Caco-2 (cell line): ENCODE measurements at regions of chr1 and their contacts with region 1.

Region 1: DNA sequence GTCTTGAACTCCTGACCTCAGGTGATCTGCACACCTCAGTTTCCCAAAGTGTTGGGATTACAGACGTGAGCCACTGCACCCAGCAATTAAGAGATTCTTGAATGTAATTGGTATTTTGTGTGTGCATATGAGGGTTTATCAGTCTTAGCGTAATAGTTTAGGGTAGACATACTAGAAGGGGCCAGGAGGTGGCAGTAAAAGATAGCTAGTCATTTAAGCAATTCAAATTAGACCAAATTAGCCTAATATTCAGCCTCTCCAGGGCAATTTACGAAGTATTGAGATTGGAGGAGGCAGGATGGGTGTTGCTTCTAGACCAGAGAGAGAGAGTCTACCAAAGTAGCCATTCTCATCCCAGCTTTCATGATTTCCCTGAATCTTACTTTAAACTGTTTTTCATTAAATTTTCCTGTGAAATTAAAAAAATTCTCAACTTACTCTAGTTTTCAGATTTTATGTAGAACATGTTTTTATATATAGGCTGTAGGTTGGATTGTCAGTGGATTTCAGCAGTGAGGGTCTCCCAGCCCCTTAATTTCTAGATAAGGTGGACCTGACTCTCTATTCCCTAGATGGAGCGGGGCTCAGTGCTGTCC is 119.7 kb downstream of the HHAT start:
- DNase-seq: peak in 1 of 2 experiments; percentile 41
- H3K4me3 ChIP-seq: no peak overlapping the region
- H3K4me3 Mint-ChIP-seq: no peak overlapping the region
- H3K27ac Mint-ChIP-seq: no peak overlapping the region
- H3K4me1 ChIP-seq: no peaks in the 10 kb centered on the region
- H3K4me1 Mint-ChIP-seq: no peaks in the 10 kb centered on the region
- H3K27me3 ChIP-seq: no peaks in the 10 kb centered on the region
- H3K27me3 Mint-ChIP-seq: peaks cover 8% of the 10 kb centered on the region
- CTCF ChIP-seq: peak; percentile 49 to 68

Region 2: GRCh38 chr1:210407207-210407886 is 41.0 kb before region 1 on chr1:
- CTCF ChIA-PET with region 1: interaction called, 9 read pairs
- POLR2A ChIA-PET with region 1: no interaction called
- intact Hi-C with region 1: loop called (anchors 5 kb)
- DNase-seq: peak; percentile 50 to 82
- H3K4me3 ChIP-seq: no peak overlapping the region
- H3K4me3 Mint-ChIP-seq: no peak overlapping the region
- H3K27ac Mint-ChIP-seq: no peak overlapping the region
- H3K4me1 ChIP-seq: no peaks in the 10 kb centered on the region
- H3K4me1 Mint-ChIP-seq: no peaks in the 10 kb centered on the region
- H3K27me3 ChIP-seq: no peaks in the 10 kb centered on the region
- H3K27me3 Mint-ChIP-seq: no peaks in the 10 kb centered on the region
- CTCF ChIP-seq: peak; percentile 92 to 96

Region 3: GRCh38 chr1:210428696-210429095 is 19.7 kb before region 1 on chr1:
- CTCF ChIA-PET with region 1: no interaction called
- POLR2A ChIA-PET with region 1: no interaction called
- intact Hi-C with region 1: no loop called
- DNase-seq: no peak
- H3K4me3 ChIP-seq: no peak overlapping the region
- H3K4me3 Mint-ChIP-seq: no peak overlapping the region
- H3K27ac Mint-ChIP-seq: no peak overlapping the region
- H3K4me1 ChIP-seq: no peaks in the 10 kb centered on the region
- H3K4me1 Mint-ChIP-seq: no peaks in the 10 kb centered on the region
- H3K27me3 ChIP-seq: no peaks in the 10 kb centered on the region
- H3K27me3 Mint-ChIP-seq: peaks cover 22% of the 10 kb centered on the region
- CTCF ChIP-seq: no peak

Region 4: DNA sequence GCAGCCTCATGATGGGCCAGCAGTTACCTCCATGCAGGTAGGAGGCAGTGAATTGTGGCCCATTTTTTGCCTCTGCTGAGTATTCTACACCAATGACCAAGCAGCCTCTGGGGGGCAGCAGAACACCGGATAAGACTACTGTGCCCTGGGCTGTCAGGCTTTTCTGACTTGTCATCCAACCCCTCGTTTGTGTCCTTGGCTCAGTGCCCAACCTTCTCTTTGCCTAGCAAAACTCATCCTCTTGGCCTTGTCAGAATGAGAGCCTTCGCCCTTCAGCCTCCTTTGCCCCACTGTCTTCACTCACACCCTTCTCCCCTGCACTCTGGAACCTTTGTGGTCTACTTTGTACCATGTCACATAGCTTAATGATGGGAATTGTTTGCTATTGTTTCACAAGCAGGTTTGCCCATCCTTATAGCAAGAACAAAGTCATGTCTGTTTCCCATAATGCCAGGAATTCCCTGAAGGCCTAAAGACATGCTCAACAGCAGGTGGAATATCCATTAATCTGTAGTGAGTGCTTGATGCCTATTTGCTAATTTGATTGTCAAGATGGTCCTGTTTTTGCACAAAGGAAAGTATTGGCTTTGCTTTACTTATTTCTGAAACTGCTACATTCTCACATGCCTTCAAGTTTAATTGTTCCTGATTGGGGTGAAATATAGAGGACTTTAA is 136.2 kb after region 1 on chr1:
- CTCF ChIA-PET with region 1: interaction called, 3 read pairs
- POLR2A ChIA-PET with region 1: no interaction called
- intact Hi-C with region 1: loop called (anchors 1 kb)
- DNase-seq: peak; percentile 78 to 84
- H3K4me3 ChIP-seq: no peak overlapping the region
- H3K4me3 Mint-ChIP-seq: no peak overlapping the region
- H3K27ac Mint-ChIP-seq: no peak overlapping the region
- H3K4me1 ChIP-seq: no peaks in the 10 kb centered on the region
- H3K4me1 Mint-ChIP-seq: peaks cover 7% of the 10 kb centered on the region
- H3K27me3 ChIP-seq: no peaks in the 10 kb centered on the region
- H3K27me3 Mint-ChIP-seq: no peaks in the 10 kb centered on the region
- CTCF ChIP-seq: peak; percentile 73 to 82

Region 5: DNA sequence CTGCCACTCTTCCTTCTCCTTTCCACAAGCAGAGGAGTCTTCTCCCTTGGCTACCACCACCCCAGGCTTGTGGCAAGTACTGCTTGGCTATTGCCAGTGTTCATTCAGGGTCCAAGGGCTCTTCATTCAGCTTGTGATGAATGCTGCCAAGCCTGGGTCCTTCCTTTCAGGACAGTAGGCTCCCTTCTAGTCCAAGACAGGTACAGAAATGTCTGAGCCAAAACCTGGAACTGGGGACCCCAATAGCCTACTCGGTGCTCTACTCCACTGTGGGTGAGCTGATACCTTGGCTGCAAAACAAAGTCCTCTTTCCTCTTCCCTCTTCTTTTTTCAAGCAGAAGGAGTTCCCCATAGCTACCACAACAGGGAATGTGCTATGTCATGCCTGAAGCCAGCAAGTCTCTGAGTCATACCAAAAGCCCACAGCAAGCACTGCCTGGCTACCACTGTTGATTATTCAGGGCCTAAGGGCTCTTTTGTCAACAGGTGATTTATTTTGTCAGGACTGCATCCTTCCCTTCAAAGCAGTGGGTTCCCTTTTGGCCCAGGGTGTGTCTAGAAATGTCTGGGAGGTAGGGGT is 149.2 kb after region 1 on chr1:
- CTCF ChIA-PET with region 1: interaction called, 12 read pairs
- POLR2A ChIA-PET with region 1: no interaction called
- intact Hi-C with region 1: no loop called
- DNase-seq: peak; percentile 52 to 56
- H3K4me3 ChIP-seq: no peak overlapping the region
- H3K4me3 Mint-ChIP-seq: no peak overlapping the region
- H3K27ac Mint-ChIP-seq: peak overlapping the region; percentile 85
- H3K4me1 ChIP-seq: peaks cover 15% of the 10 kb centered on the region; the same call in 1 of the 2 replicates
- H3K4me1 Mint-ChIP-seq: peaks cover 18% of the 10 kb centered on the region
- H3K27me3 ChIP-seq: no peaks in the 10 kb centered on the region
- H3K27me3 Mint-ChIP-seq: peaks cover 11% of the 10 kb centered on the region
- CTCF ChIP-seq: no peak

Region 6: DNA sequence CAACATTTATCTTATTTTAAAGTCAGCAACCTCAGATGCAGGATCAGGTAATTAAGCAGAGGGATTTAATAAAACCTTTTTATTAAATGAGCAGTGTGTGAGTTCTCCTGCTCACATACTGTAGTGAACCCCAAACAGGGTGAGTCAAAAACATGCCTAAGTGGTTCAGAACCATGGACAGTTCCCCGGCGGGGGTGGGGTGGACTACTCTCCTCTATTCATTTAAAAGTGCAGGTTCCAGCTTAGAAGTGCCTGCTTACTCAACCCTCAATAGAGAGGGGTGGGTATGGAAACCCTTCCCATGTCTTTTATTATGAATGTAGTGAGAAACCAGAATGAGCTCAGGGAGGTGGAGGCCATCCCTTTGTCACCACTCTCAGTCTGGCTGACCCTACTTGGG is 278.2 kb after region 1 on chr1:
- CTCF ChIA-PET with region 1: no interaction called
- POLR2A ChIA-PET with region 1: no interaction called
- intact Hi-C with region 1: no loop called
- DNase-seq: peak in 1 of 2 experiments; percentile 58
- H3K4me3 ChIP-seq: no peak overlapping the region
- H3K4me3 Mint-ChIP-seq: no peak overlapping the region
- H3K27ac Mint-ChIP-seq: no peak overlapping the region
- H3K4me1 ChIP-seq: no peaks in the 10 kb centered on the region; the same call in 1 of the 2 replicates
- H3K4me1 Mint-ChIP-seq: no peaks in the 10 kb centered on the region
- H3K27me3 ChIP-seq: no peaks in the 10 kb centered on the region
- H3K27me3 Mint-ChIP-seq: peaks cover 3% of the 10 kb centered on the region
- CTCF ChIP-seq: no peak

Region 7: GRCh38 chr1:210779269-210779668 is 330.9 kb after region 1 on chr1:
- CTCF ChIA-PET with region 1: no interaction called
- POLR2A ChIA-PET with region 1: no interaction called
- intact Hi-C with region 1: loop called (anchors 5 kb)
- DNase-seq: no peak
- H3K4me3 ChIP-seq: no peak overlapping the region
- H3K4me3 Mint-ChIP-seq: no peak overlapping the region
- H3K27ac Mint-ChIP-seq: no peak overlapping the region
- H3K4me1 ChIP-seq: no peaks in the 10 kb centered on the region
- H3K4me1 Mint-ChIP-seq: no peaks in the 10 kb centered on the region
- H3K27me3 ChIP-seq: no peaks in the 10 kb centered on the region
- H3K27me3 Mint-ChIP-seq: peaks cover 12% of the 10 kb centered on the region
- CTCF ChIP-seq: no peak

Region 8: GRCh38 chr1:211133836-211134669 is 685.7 kb after region 1 on chr1 and contains the start of gene KCNH1:
- CTCF ChIA-PET with region 1: interaction called, 17 read pairs
- POLR2A ChIA-PET with region 1: no interaction called
- intact Hi-C with region 1: loop called (anchors 1 kb)
- DNase-seq: peak; percentile 65 to 87
- H3K4me3 ChIP-seq: peak within 1 kb of the TSS; percentile 26
- H3K4me3 Mint-ChIP-seq: peak within 1 kb of the TSS; percentile 60
- H3K27ac Mint-ChIP-seq: no peak within 1 kb of the TSS
- H3K4me1 ChIP-seq: no peaks in the 10 kb centered on the region
- H3K4me1 Mint-ChIP-seq: no peaks in the 10 kb centered on the region
- H3K27me3 ChIP-seq: no peaks in the 10 kb centered on the region; the same call in 1 of the 2 replicates
- H3K27me3 Mint-ChIP-seq: peaks cover 23% of the 10 kb centered on the region
- CTCF ChIP-seq: peak; percentile 75 to 94
- total RNA-seq, gene KCNH1: 0.16 TPM in 1 of 2 replicates, not detected in the other